Posterior vena cava (tissue), 2 donors: ENCODE measurements at regions of chr1 and their contacts with region 1.

Region 1: GRCh38 chr1:166884040-166884642 is 8.1 kb upstream of the TADA1 start:
- DNase-seq: peak; percentile 84

Region 2: GRCh38 chr1:166910396-166910994 is 26.4 kb after region 1 on chr1:
- intact Hi-C with region 1: no loop called
- DNase-seq: no peak

Region 3: DNA sequence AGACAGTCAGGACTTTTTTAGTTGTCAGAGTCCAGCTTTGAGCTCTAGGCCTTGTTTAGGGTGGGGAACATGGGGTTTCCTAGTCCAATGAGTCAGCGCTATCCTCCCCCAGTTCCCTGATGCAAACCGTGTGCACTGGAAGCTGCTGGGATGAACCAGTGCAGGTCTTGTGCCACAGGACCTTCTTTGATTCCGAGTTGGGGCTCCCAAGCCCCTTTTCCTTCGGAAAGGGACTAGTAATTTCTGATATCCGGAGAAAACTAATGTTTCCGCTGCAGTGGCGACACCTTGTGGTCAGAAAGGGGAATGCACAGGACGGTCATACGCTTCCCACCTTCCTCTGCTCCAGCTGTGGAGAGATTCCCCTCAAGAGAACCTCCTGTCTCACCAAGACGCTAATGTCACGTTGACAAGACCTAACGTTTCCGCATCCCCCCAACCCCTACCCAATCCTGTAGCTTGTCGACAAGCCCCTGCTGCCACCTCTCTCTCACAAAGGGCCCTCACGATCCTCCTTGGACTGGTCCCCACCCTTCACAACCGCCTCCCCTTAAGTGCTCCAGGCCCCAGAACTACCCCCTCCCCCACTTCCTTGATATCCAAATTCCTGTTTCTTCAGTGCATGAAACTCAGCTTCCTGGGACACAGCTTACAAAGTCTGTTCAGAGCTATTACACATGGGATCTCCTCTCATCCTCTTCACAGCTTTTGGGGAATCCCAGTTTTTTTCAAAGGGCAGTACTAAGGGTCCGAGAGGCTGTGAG is 175.1 kb after region 1 on chr1:
- intact Hi-C with region 1: loop called in 1 of 2 experiments (anchors 10 kb)
- DNase-seq: peak; percentile 88

Region 4: DNA sequence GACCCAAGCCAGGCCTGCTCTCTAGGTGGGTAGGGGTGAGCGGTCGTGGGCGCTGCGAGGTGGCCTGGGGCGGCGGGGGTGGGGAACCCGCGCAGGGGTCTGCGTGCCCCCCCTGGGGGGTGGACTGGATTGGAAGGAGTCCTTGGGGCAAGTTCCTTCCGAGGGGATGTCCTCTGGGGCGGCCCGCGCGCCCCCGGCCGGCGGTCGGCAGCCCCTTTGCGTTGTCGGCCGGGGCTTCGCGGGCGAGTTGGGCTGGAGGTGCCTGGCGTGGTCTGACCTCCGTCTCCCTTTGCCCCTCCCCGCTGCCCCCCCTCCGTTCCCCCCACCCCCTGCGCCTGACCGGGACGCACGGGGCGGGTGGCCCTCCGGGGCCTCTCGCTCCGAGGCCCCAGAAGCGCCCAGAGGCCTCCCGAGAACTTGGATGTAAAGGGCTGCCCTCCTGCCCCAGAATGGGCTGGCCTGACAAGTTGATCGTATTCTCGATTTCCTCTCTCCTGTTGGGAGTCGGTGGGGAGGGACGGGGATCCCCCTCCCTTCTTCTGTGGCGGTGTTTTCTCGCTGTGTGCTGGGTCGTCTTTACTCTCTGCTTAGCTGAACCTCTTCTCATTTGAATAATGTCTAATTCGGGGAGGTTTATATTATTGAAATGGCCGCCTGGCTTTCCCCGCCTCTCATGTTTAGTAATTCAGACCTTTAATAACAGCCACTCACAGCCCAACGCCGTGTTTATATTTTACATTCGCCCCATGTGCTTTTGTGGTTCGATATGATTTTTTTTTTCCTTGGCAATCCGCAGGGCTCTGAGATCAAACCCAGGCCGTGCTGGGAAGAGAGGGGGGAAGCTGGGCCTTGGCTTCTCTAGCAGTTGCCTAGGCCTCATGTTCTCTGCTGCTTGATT is 337.8 kb after region 1 on chr1:
- intact Hi-C with region 1: no loop called
- DNase-seq: peak; percentile 86

Region 5: DNA sequence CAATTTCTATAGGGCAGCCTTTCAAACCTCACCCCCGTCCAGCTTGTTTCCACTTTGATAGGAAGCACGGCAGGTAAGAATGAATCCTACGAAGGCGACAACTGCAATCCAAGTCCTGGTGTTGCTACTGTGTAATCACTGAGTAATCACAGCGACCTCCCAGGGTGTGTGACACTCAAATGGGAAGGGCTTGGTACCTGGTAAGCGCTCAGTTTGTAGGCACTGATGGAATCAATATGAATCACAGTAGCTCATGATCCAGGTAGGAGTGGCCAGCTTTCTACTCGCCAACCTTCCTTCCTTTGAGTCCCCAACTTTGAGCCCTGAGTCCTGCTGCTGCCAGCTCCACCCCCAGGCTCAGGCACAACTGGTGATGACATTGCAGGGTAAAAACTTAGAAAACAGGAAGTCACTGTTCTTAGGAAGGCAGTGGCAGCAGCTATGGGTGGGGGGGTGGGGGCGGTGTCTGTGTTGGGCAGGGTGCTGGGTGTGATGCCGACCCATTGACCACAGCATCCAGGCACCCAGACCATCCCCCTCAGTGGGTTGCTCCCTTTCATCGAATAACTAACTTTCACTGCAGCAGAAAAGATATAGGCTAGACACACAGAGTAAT is 563.5 kb after region 1 on chr1:
- intact Hi-C with region 1: loop called in 1 of 2 experiments (anchors 5 kb)
- DNase-seq: no peak